GM10248 (cell line): ENCODE measurements at regions of chr10 and their contacts with region 1.

Region 1: GRCh38 chr10:14195433-14195832 is 135.3 kb downstream of the FRMD4A start:
- DNase-seq: no peak
- CTCF ChIP-seq: no peak

Region 2: DNA sequence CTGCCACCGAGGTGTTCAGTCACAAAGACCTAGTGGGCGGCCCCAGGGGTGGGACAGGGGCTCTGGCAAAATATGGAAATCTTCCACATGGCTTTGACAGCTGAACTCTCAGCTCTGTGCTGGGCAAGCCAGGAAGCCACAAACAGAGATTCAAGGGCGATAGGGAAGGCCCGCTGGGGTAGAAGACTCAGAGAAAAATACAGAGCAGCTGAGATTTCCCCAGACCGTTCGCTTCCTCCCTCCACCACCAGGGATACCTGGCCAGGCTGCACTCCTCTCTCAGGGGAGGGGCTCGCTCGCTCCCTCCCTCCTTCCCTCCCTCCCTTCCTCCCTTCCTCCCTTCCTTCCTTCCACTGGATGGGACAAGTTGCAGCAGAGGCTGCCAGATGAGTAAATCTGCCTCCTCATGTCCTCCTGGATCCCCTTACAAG is 348.2 kb before region 1 on chr10:
- CTCF ChIA-PET with region 1: no interaction called
- POLR2A ChIA-PET with region 1: no interaction called
- DNase-seq: no peak
- CTCF ChIP-seq: no peak

Region 3: GRCh38 chr10:14056610-14057332 is 138.7 kb before region 1 on chr10:
- CTCF ChIA-PET with region 1: no interaction called
- POLR2A ChIA-PET with region 1: no interaction called
- DNase-seq: no peak
- CTCF ChIP-seq: no peak

Region 4: DNA sequence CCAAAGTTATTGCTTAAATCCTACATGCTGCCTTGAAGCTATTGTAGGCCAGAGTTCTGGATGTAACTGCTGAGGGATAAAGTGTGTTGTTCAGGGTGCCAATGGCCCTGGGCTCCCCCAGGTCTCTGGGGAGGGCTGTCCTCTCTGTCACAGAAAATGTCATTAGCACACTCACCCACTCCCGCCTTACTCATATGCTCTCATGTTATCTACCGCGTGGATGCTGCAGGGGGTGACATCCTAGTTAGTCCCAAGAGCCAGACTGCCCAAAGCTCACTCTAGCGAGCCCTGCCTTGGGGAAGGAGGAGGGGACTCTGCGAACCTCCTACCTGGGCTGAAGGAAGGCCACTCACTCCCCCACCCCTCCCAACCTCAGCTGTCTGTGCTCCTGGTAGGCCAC is 12.8 kb after region 1 on chr10:
- CTCF ChIA-PET with region 1: interaction called, 29 read pairs
- POLR2A ChIA-PET with region 1: no interaction called
- DNase-seq: no peak
- CTCF ChIP-seq: no peak

Region 5: DNA sequence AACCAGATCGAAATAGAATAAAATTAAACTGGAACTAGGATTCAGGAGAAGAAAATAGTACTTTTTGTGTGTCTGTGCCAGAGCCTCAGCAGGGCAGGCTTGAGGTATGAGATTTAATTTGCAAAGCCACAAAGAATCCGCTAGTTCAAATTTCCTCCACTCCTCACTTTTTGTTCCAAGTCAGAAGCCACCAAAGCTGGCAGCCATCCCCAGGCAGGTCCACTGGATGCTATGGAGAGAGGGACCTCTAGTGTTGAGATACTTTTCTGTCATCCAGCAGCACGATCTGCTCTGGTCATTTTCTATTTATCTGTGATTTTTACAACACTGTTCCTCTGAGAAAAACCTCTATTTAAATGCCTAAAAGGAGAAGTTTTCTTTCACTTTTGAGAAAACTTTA is 283.2 kb after region 1 on chr10:
- CTCF ChIA-PET with region 1: interaction called, 27 read pairs
- POLR2A ChIA-PET with region 1: no interaction called
- DNase-seq: peak; percentile 37
- CTCF ChIP-seq: peak; percentile 36

Region 6: GRCh38 chr10:14543046-14543903 is 347.8 kb after region 1 on chr10:
- CTCF ChIA-PET with region 1: interaction called, 10 read pairs
- POLR2A ChIA-PET with region 1: no interaction called
- DNase-seq: no peak
- CTCF ChIP-seq: peak; percentile 15